ENCODE measurements at regions of chr5 and their contacts with region 1.

Region 1: DNA sequence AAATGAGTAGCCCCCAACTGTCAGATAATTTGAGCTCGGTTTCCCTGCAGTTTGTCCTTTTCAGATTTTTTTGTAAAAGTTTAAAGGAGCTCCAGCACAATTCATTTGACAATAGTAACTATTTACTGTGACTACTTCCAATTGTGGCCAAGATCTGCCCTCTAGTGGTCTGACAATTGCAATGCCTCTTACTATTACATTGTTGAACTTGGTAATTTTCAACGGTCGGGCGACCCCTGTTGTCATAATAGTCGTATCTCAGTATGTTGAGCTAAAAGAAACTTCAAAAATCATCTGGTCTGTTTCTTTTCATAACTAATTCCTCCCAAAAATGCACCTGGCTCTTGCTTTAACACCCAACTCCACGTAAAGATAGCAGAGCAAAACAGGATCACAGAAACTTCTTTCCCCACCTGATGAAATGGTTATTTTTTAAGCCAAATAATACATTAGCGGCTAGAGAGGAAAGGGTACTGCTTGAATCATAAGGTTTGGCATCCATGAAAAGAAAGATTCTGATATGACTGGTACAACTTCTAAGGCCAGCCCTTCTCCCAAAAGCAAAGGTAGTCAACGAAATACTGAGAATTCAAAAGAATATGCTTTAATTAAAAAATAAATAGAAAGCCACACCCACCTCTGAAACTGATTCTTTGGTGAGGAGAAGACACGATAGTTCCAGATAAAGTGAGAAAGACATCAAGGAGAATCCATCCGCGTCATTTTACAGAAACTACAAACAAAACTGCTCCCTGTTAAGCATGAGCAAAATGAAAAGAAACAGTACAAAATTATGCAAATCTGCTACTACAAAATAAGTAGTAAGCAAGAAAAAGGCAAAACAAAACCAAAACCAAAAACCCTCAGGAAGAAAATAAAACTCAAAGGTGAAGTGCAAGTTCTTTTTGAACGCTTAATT is 76.9 kb upstream of the HTR4 start:
- DNase-seq: peak; percentile 89
- ATAC-seq: peak; percentile 95
- H3K4me3 Mint-ChIP-seq: peak overlapping the region; percentile 20
- H3K27ac Mint-ChIP-seq: peak overlapping the region; percentile 30
- H3K4me1 Mint-ChIP-seq: peaks cover 2% of the 10 kb centered on the region
- H3K27me3 Mint-ChIP-seq: peaks cover 5% of the 10 kb centered on the region
- CTCF ChIP-seq: peak; percentile 98

Region 2: DNA sequence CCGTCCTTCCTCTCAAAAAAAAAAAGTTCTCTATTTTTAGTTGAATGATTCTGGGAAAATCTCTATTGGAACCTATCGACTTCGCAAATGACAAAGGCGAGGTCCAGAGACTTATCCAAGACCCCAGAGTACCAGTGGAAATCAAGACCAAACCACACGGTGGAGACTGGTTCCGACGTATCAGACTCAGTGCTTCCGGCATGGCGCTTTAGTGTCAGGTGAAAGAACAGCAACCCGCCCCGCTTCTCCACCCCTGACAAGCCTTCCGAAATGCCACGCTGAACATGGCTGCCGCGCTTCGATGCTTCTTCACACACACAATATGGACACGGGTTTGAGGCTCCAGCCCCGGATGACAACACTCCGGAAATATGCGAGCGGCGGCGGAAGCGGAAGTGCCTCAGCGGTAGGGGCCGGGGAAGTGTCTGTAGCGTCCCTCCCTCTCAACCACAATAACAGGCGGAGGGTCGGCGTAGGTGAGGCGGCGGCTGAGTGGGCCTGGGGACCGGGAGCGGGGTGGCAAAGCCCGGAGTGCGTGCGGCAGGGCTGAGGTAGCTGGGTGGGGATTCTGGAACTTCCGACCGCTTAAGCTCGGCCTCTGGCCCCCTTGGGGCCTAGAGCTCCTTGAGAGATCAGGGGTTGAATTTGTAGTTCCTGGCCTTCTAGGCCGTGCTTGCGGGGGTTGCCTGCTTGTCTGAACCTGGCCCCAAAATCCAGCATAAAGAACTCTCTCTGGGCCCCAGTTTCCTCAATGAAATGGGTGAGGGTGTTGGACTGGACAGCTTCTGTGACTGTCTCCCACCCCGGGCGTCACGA is 347.4 kb before region 1 on chr5 and contains the start of gene FBXO38:
- CTCF ChIA-PET with region 1: interaction called, 11 read pairs
- POLR2A ChIA-PET with region 1: no interaction called
- intact Hi-C with region 1: no loop called
- DNase-seq: peak; percentile 99
- ATAC-seq: peak; percentile 96
- H3K4me3 Mint-ChIP-seq: peak within 1 kb of the TSS; percentile 99
- H3K27ac Mint-ChIP-seq: peak within 1 kb of the TSS; percentile 100
- H3K4me1 Mint-ChIP-seq: peaks cover 63% of the 10 kb centered on the region
- H3K27me3 Mint-ChIP-seq: no peaks in the 10 kb centered on the region
- CTCF ChIP-seq: no peak
- total RNA-seq, gene FBXO38: 38.0 to 39.6 TPM

Region 3: GRCh38 chr5:148482691-148483462 is 248.3 kb before region 1 on chr5:
- CTCF ChIA-PET with region 1: interaction called, 12 read pairs
- POLR2A ChIA-PET with region 1: no interaction called
- intact Hi-C with region 1: no loop called
- DNase-seq: peak; percentile 71
- ATAC-seq: peak; percentile 92
- H3K4me3 Mint-ChIP-seq: peak overlapping the region; percentile 32
- H3K27ac Mint-ChIP-seq: no peak overlapping the region
- H3K4me1 Mint-ChIP-seq: no peaks in the 10 kb centered on the region
- H3K27me3 Mint-ChIP-seq: peaks cover 24% of the 10 kb centered on the region
- CTCF ChIP-seq: peak; percentile 77

Region 4: DNA sequence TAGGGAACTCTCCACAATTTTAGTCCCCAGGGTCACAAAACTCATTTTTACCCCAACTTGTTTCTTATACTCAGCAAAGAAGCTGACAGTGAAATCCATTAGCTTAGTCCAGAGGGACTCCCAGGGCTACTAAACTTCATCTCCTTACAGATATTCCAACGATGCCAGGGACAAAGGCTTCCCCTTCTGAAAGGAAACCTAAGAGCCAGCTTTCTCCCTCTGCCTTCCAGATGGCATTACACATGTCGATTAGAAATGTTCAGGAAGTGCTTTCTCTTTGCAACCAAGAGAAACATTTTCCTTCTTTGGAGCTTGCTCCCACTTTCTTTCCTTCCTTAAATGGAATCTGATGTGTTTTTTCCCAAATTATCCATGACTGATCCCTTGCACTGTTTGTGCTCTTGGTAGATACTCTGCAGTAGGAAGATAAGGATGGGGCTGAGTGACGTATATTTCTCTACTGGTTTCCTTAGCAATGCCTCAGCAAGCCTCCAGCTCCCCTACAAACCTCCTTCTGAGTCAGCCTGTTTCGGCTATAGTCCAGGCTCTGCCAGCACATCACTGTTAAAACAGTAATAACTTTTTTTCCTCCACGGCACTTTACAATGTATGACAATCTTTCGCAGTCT is 33.9 kb before region 1 on chr5:
- CTCF ChIA-PET with region 1: interaction called, 11 read pairs
- POLR2A ChIA-PET with region 1: no interaction called
- intact Hi-C with region 1: no loop called
- DNase-seq: no peak
- ATAC-seq: no peak
- H3K4me3 Mint-ChIP-seq: no peak overlapping the region
- H3K27ac Mint-ChIP-seq: no peak overlapping the region
- H3K4me1 Mint-ChIP-seq: peaks cover 4% of the 10 kb centered on the region
- H3K27me3 Mint-ChIP-seq: peaks cover 26% of the 10 kb centered on the region
- CTCF ChIP-seq: no peak

Region 5: DNA sequence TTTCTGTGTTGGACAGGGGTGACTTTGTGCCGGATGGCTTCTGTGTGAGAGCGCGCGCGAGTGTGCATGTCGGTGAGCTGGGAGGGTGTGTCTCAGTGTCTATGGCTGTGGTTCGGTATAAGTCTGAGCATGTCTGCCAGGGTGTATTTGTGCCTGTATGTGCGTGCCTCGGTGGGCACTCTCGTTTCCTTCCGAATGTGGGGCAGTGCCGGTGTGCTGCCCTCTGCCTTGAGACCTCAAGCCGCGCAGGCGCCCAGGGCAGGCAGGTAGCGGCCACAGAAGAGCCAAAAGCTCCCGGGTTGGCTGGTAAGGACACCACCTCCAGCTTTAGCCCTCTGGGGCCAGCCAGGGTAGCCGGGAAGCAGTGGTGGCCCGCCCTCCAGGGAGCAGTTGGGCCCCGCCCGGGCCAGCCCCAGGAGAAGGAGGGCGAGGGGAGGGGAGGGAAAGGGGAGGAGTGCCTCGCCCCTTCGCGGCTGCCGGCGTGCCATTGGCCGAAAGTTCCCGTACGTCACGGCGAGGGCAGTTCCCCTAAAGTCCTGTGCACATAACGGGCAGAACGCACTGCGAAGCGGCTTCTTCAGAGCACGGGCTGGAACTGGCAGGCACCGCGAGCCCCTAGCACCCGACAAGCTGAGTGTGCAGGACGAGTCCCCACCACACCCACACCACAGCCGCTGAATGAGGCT is 95.0 kb after region 1 on chr5 and contains the start of gene ADRB2:
- CTCF ChIA-PET with region 1: interaction called, 11 read pairs
- POLR2A ChIA-PET with region 1: no interaction called
- intact Hi-C with region 1: no loop called
- DNase-seq: peak; percentile 92
- ATAC-seq: peak; percentile 94
- H3K4me3 Mint-ChIP-seq: peak within 1 kb of the TSS; percentile 83
- H3K27ac Mint-ChIP-seq: peak within 1 kb of the TSS; percentile 76
- H3K4me1 Mint-ChIP-seq: peaks cover 28% of the 10 kb centered on the region
- H3K27me3 Mint-ChIP-seq: peaks cover 12% of the 10 kb centered on the region
- CTCF ChIP-seq: no peak
- total RNA-seq, gene ADRB2: 0.81 to 0.98 TPM

Region 6: DNA sequence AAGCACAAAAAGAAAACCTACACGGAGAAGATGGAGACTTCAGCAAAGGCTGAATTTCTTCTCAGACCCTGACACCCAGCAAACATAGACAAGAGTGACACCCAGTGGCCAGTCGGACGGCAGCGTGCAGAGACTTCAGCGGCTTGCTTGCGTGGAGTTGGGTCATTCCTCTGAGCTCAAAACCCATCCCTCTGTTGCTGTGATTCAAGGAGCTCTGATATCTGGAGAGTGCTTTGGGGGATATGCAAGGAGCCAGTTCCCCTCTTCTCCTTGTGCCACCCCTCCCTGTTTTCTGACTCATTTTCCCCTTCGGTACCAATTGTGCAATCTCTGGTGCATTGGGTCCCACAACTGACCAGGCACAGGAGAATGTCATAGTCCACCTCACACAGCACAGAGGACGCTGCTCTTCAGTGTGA is 304.2 kb after region 1 on chr5:
- CTCF ChIA-PET with region 1: interaction called, 409 read pairs
- POLR2A ChIA-PET with region 1: interaction called, 3 read pairs
- intact Hi-C with region 1: loop called (anchors 1 kb)
- DNase-seq: peak; percentile 84
- ATAC-seq: peak; percentile 66
- H3K4me3 Mint-ChIP-seq: no peak overlapping the region
- H3K27ac Mint-ChIP-seq: no peak overlapping the region
- H3K4me1 Mint-ChIP-seq: peaks cover 20% of the 10 kb centered on the region
- H3K27me3 Mint-ChIP-seq: peaks cover 10% of the 10 kb centered on the region
- CTCF ChIP-seq: peak; percentile 78

Region 7: GRCh38 chr5:149809931-149810617 is 1078.9 kb after region 1 on chr5:
- CTCF ChIA-PET with region 1: no interaction called
- POLR2A ChIA-PET with region 1: no interaction called
- intact Hi-C with region 1: no loop called
- DNase-seq: no peak
- ATAC-seq: no peak
- H3K4me3 Mint-ChIP-seq: no peak overlapping the region
- H3K27ac Mint-ChIP-seq: no peak overlapping the region
- H3K4me1 Mint-ChIP-seq: peaks cover 9% of the 10 kb centered on the region
- H3K27me3 Mint-ChIP-seq: no peaks in the 10 kb centered on the region
- CTCF ChIP-seq: no peak